ENCODE measurements at regions of chr9 and their contacts with region 1.

Region 1: DNA sequence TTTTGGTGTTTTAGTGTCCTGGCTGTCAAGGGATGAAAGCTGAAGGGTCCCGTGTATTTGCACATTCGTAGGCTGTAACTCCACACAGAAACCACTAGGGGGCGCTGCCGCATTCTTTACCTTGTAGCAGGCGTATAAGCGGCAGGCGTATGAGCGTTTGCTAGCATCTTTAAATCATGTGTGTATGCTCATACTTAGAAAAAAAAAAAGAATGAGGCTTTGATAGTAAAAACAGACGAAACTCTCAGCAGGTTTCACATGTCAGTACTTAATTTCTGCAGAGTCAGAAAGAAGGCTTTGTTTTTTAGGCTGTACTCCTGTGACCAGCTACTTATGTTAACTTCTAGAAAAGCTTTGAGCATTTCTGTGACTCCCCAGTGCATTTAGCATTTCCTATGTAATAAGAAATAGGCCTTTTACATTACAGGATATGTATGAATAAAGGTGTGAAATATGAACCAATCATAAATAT is 218.8 kb upstream of the ADAMTSL1 start:
- DNase-seq: peak; percentile 50 to 71
- H3K4me3 ChIP-seq: no peak overlapping the region
- H3K4me3 Mint-ChIP-seq: no peak overlapping the region
- H3K27ac Mint-ChIP-seq: no peak overlapping the region
- H3K4me1 ChIP-seq: no peaks in the 10 kb centered on the region
- H3K4me1 Mint-ChIP-seq: no peaks in the 10 kb centered on the region
- H3K27me3 ChIP-seq: no peaks in the 10 kb centered on the region
- H3K27me3 Mint-ChIP-seq: peaks cover 12% of the 10 kb centered on the region
- CTCF ChIP-seq: peak; percentile 72

Region 2: DNA sequence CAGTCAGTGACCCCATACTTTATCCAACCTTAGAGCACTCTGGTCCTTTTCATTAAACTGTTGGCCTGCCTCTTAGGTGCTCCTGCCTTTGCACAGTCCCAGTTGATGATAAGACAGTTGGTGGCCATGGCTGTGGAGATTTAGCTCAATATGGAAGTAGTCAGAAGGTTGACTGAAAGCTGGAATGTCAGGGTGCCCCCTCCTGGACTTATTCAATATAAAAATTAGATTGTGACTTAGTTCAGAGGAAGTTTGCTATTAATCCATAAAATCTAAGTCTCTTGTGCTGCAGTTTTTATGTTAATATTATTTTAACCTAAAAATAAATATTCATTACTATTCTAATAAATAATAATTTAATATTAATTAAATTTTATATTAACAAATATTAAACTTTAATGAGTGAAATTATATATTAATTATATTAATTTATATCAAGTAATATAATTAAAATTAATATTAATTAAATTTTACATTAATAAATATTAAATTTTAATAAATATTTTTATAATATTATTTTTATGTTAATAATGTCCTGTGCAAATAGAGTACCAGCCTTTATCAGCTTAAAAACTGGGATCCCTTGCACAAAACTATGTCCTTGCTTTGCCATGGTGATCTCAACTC is 141.0 kb after region 1 on chr9:
- CTCF ChIA-PET with region 1: interaction called, 4 read pairs
- POLR2A ChIA-PET with region 1: no interaction called
- intact Hi-C with region 1: loop called (anchors 2 kb)
- DNase-seq: no peak
- H3K4me3 ChIP-seq: no peak overlapping the region
- H3K4me3 Mint-ChIP-seq: no peak overlapping the region
- H3K27ac Mint-ChIP-seq: no peak overlapping the region
- H3K4me1 ChIP-seq: no peaks in the 10 kb centered on the region
- H3K4me1 Mint-ChIP-seq: no peaks in the 10 kb centered on the region
- H3K27me3 ChIP-seq: no peaks in the 10 kb centered on the region; the same call in 1 of the 2 replicates
- H3K27me3 Mint-ChIP-seq: peaks cover 3% of the 10 kb centered on the region
- CTCF ChIP-seq: no peak

Region 3: GRCh38 chr9:18442629-18443491 is 187.7 kb after region 1 on chr9:
- CTCF ChIA-PET with region 1: interaction called, 13 read pairs
- POLR2A ChIA-PET with region 1: no interaction called
- intact Hi-C with region 1: loop called (anchors 1 kb)
- DNase-seq: peak; percentile 60 to 68
- H3K4me3 ChIP-seq: no peak overlapping the region
- H3K4me3 Mint-ChIP-seq: no peak overlapping the region
- H3K27ac Mint-ChIP-seq: no peak overlapping the region
- H3K4me1 ChIP-seq: no peaks in the 10 kb centered on the region
- H3K4me1 Mint-ChIP-seq: no peaks in the 10 kb centered on the region
- H3K27me3 ChIP-seq: no peaks in the 10 kb centered on the region
- H3K27me3 Mint-ChIP-seq: peaks cover 3% of the 10 kb centered on the region
- CTCF ChIP-seq: peak; percentile 63 to 86

Region 4: DNA sequence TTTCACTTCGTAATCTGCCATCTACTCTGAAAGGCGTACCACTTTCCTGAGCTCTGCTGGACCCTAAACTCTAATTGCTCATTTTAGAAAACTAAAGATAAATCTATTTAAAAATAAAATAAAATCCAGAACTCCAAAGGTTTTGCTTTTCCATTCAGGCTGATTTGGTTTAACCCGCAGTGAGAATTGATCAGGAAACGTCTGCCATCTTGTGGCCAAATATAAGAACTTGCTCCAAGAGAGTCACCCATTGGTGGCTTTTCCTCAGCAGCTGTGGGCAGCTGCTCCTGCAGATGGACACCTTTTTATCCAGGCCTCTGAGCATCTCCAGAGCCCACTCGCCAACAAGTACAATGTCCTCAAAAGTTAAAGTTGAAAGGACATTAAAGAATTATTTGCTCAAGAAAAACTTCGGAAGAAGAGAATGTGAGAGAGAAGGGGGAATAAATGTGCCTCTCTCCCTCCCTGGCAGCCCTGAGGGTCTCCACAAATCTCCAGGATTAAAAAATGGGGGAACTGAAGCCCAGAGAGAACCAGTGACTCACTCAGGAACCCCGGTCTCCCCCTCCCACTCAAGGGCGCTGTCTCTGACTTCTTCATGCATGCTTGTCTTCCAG is 773.7 kb after region 1 on chr9:
- CTCF ChIA-PET with region 1: interaction called, 3 read pairs
- POLR2A ChIA-PET with region 1: no interaction called
- intact Hi-C with region 1: loop called (anchors 2 kb)
- DNase-seq: peak in 1 of 2 experiments; percentile 49
- H3K4me3 ChIP-seq: no peak overlapping the region
- H3K4me3 Mint-ChIP-seq: no peak overlapping the region
- H3K27ac Mint-ChIP-seq: no peak overlapping the region
- H3K4me1 ChIP-seq: no peaks in the 10 kb centered on the region
- H3K4me1 Mint-ChIP-seq: no peaks in the 10 kb centered on the region
- H3K27me3 ChIP-seq: no peaks in the 10 kb centered on the region
- H3K27me3 Mint-ChIP-seq: peaks cover 15% of the 10 kb centered on the region
- CTCF ChIP-seq: peak; percentile 55 to 58

Measured in Caco-2 (cell line).